OCI-LY7 (cell line): ENCODE measurements at regions of chr6 and their contacts with region 1.

Region 1: GRCh38 chr6:11460001-11460668 is 77.4 kb upstream of the TMEM170B start:
- DNase-seq: peak; percentile 56
- H3K4me3 ChIP-seq: peak overlapping the region; percentile 56
- H3K27ac ChIP-seq: peak overlapping the region; percentile 91
- H3K4me1 ChIP-seq: peaks cover 49% of the 10 kb centered on the region
- CTCF ChIP-seq: peak; percentile 68

Region 2: GRCh38 chr6:9914951-9915350 is 1545.2 kb before region 1 on chr6:
- CTCF ChIA-PET with region 1: no interaction called
- POLR2A ChIA-PET with region 1: no interaction called
- intact Hi-C with region 1: no loop called
- DNase-seq: no peak
- H3K4me3 ChIP-seq: no peak overlapping the region
- H3K27ac ChIP-seq: no peak overlapping the region
- H3K4me1 ChIP-seq: no peaks in the 10 kb centered on the region
- CTCF ChIP-seq: no peak

Region 3: DNA sequence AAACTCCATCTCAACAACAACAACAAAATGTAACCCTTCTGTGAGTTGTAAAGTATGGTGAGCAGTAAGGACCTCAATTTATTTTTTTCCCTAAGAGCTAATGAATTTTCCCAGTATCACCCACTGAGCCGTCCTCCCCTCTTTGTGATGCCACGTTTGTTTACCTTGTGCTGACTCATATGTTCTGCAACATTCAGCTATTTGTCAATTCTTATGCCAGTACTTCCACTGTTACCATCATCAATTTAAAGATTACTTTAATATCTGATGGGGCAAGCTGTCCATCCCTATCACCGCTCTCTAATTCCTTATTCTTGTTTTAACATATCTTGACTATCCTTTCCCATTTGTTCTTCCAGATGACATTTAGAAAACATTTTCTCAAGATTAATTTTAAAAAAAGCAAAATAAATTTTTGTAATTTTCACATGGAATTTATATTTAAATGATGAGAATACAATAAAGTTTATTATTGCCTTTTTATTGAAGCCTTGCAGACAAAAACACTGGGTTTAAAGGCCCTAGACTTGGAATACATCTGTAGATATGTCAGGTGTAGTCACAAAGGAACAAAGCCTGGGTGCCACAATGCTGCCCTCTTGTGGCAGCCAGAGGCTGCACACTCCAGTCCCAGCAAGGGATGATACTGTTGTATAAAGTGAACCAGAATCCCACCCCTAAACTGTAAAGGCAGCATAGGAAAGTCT is 659.2 kb before region 1 on chr6:
- CTCF ChIA-PET with region 1: no interaction called
- POLR2A ChIA-PET with region 1: no interaction called
- intact Hi-C with region 1: no loop called
- DNase-seq: peak; percentile 70
- H3K4me3 ChIP-seq: no peak overlapping the region
- H3K27ac ChIP-seq: no peak overlapping the region
- H3K4me1 ChIP-seq: no peaks in the 10 kb centered on the region
- CTCF ChIP-seq: peak; percentile 100

Region 4: DNA sequence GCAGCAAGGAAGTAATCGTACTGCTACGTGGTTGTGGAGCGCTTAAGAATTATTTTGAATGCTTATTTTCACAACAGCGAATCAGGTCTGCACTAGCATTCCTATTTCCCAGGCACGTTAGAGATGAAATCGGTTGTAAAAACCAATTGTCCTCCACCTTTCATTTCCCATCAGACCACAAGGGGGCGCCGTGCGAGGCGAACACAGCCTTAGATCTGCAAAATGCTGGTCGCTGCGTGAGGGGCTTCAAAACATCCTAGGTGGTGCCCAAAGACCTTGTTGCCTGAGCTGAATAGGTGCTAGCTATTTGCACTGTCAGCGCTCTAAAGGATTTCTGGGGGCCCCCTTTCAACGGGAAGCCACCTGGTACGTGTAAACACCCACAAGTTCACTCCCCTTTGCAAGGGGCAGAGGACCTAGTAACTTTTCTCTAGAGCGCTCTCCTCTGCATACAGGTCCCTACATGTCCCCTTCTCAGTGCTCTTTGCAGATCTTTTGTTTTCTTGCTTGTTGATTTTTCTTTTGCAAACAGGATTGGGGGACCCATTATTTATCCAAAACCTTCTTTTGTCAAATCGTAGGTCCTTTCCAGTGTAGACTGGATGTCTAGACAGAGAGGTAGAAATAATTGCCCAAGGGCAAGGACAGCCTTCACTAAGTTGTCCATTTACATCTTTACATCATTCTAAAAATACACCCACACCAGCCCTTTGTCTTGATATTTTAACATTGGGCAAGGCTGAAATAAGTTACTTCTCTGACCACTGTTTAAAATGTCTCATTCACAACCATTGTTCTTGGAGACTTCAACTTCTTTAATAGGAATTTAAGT is 287.4 kb before region 1 on chr6:
- CTCF ChIA-PET with region 1: interaction called, 3 read pairs
- POLR2A ChIA-PET with region 1: no interaction called
- intact Hi-C with region 1: loop called (anchors 1 kb)
- DNase-seq: peak; percentile 66
- H3K4me3 ChIP-seq: no peak overlapping the region
- H3K27ac ChIP-seq: no peak overlapping the region
- H3K4me1 ChIP-seq: no peaks in the 10 kb centered on the region
- CTCF ChIP-seq: peak; percentile 94

Region 5: GRCh38 chr6:11330413-11330760 is 129.7 kb before region 1 on chr6:
- CTCF ChIA-PET with region 1: no interaction called
- POLR2A ChIA-PET with region 1: no interaction called
- intact Hi-C with region 1: loop called (anchors 2 kb)
- DNase-seq: no peak
- H3K4me3 ChIP-seq: no peak overlapping the region
- H3K27ac ChIP-seq: no peak overlapping the region
- H3K4me1 ChIP-seq: peaks cover 34% of the 10 kb centered on the region
- CTCF ChIP-seq: no peak

Region 6: GRCh38 chr6:11413728-11414127 is 46.4 kb before region 1 on chr6:
- CTCF ChIA-PET with region 1: no interaction called
- POLR2A ChIA-PET with region 1: interaction called, 4 read pairs
- intact Hi-C with region 1: loop called (anchors 1 kb)
- DNase-seq: no peak
- H3K4me3 ChIP-seq: no peak overlapping the region
- H3K27ac ChIP-seq: no peak overlapping the region
- H3K4me1 ChIP-seq: peaks cover 23% of the 10 kb centered on the region
- CTCF ChIP-seq: no peak

Region 7: GRCh38 chr6:11537229-11538051 is 77.3 kb after region 1 on chr6 and contains the start of gene TMEM170B:
- CTCF ChIA-PET with region 1: no interaction called
- POLR2A ChIA-PET with region 1: no interaction called
- intact Hi-C with region 1: loop called (anchors 2 kb)
- DNase-seq: peak; percentile 94
- H3K4me3 ChIP-seq: peak within 1 kb of the TSS; percentile 89
- H3K27ac ChIP-seq: peak within 1 kb of the TSS; percentile 5
- H3K4me1 ChIP-seq: peaks cover 10% of the 10 kb centered on the region
- CTCF ChIP-seq: no peak
- total RNA-seq, gene TMEM170B: 3.4 and 4.1 TPM in 2 replicates